Right ventricle myocardium inferior (tissue), 1 donor: ENCODE measurements at regions of chr18 and their contacts with region 1.

Region 1: GRCh38 chr18:26226229-26227005 is at the start of gene TAF4B:
- DNase-seq: peak; percentile 96
- ATAC-seq: peak; percentile 99
- total RNA-seq, gene TAF4B: 1.2 TPM

Region 2: GRCh38 chr18:26022585-26022984 is 203.8 kb before region 1 on chr18:
- intact Hi-C with region 1: loop called (anchors 10 kb)
- DNase-seq: no peak
- ATAC-seq: no peak

Region 3: DNA sequence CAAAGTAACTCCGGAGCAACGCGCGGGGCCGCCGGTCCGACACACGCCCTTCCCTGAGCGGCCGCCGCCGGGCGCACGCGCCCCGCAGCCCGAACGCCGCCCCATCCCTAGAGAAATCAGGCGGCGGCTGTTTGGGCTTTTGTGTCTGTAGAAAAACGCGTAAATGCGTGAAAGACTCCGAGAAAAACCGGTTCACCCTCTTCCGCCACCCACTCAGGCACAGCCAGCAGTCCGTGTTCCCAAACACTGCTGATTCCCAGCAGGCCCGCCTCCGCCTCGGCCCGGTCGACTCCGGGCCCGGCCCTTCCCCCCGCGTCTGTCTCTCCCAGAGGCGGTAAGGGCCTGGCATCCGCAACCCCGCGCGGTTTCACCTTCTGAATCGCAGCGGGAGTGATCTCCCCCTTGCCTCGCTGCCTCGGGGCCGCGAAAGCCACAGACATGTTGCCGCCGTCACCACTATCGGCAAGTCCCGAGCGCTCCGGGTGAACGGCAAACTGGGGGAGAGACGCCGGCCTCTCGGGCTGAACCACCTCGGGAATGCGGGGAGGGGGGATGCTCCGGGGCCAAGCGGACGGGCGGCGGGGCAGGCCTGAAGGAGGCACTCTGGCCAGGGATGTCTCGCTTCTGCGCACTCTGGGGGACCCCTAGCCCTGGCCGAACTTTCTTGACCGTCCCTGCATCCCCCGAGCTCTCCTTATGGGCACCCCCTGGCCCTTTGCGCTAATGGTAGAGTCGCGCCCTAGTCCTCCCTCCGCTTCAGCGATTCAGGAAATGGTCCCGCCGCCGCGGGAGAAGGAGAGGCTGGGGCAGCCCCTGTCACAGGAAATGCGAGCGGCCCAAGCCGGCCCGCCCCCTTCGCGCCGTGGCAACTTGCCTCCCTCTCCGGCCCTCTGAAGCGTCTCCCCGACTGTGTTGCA is 136.0 kb before region 1 on chr18 and contains the start of gene SS18:
- intact Hi-C with region 1: loop called (anchors 2 kb)
- DNase-seq: peak; percentile 95
- ATAC-seq: peak; percentile 98
- total RNA-seq, gene SS18: 27.2 TPM